ENCODE measurements at regions of chr2 and their contacts with region 1.

Region 1: GRCh38 chr2:43158259-43158880 is 68.0 kb downstream of the ZFP36L2 start:
- DNase-seq: peak; percentile 77
- H3K4me3 Mint-ChIP-seq: peak overlapping the region; percentile 71
- H3K27ac Mint-ChIP-seq: peak overlapping the region; percentile 98
- H3K4me1 Mint-ChIP-seq: peaks cover 61% of the 10 kb centered on the region
- H3K27me3 Mint-ChIP-seq: no peaks in the 10 kb centered on the region

Region 2: GRCh38 chr2:43169987-43170386 is 11.6 kb after region 1 on chr2:
- CTCF ChIA-PET with region 1: interaction called, 21 read pairs
- POLR2A ChIA-PET with region 1: interaction called, 63 read pairs
- DNase-seq: peak; percentile 77
- H3K4me3 Mint-ChIP-seq: no peak overlapping the region
- H3K27ac Mint-ChIP-seq: peak overlapping the region; percentile 94
- H3K4me1 Mint-ChIP-seq: peaks cover 68% of the 10 kb centered on the region
- H3K27me3 Mint-ChIP-seq: no peaks in the 10 kb centered on the region

Region 3: GRCh38 chr2:43219383-43220228 is 61.2 kb after region 1 on chr2:
- CTCF ChIA-PET with region 1: interaction called, 6 read pairs
- POLR2A ChIA-PET with region 1: interaction called, 32 read pairs
- DNase-seq: peak; percentile 88
- H3K4me3 Mint-ChIP-seq: peak overlapping the region; percentile 95
- H3K27ac Mint-ChIP-seq: peak overlapping the region; percentile 98
- H3K4me1 Mint-ChIP-seq: peaks cover 48% of the 10 kb centered on the region
- H3K27me3 Mint-ChIP-seq: no peaks in the 10 kb centered on the region

Region 4: GRCh38 chr2:43426305-43427031 is 268.1 kb after region 1 on chr2:
- CTCF ChIA-PET with region 1: no interaction called
- POLR2A ChIA-PET with region 1: no interaction called
- DNase-seq: peak; percentile 85
- H3K4me3 Mint-ChIP-seq: peak overlapping the region; percentile 0
- H3K27ac Mint-ChIP-seq: peak overlapping the region; percentile 75
- H3K4me1 Mint-ChIP-seq: peaks cover 41% of the 10 kb centered on the region
- H3K27me3 Mint-ChIP-seq: peaks cover 3% of the 10 kb centered on the region

Measured in activated CD4-positive, alpha-beta memory T cell treated with anti-CD3 and anti-CD28 coated beads, Interleukin-2, amount 10 ng/mL, durations not matched to agents 7 days and 5 days (primary cell).